ENCODE measurements at regions of chr1 and their contacts with region 1.

Region 1: GRCh38 chr1:18913065-18913835 is 10.9 kb upstream of the ALDH4A1 start:
- DNase-seq: peak; percentile 82 to 96 (median 90)
- H3K4me3 ChIP-seq: no peak overlapping the region
- H3K27ac ChIP-seq: peak overlapping the region in 3 of 5 donors; percentile 20 to 69 (median 36)
- H3K4me1 ChIP-seq: peaks cover 0 to 10% of the 10 kb centered on the region in 2 donors
- H3K27me3 ChIP-seq: no peaks in the 10 kb centered on the region
- CTCF ChIP-seq: peak; percentile 94 to 99 (median 98)
- POLR2A ChIP-seq: no peak

Region 2: DNA sequence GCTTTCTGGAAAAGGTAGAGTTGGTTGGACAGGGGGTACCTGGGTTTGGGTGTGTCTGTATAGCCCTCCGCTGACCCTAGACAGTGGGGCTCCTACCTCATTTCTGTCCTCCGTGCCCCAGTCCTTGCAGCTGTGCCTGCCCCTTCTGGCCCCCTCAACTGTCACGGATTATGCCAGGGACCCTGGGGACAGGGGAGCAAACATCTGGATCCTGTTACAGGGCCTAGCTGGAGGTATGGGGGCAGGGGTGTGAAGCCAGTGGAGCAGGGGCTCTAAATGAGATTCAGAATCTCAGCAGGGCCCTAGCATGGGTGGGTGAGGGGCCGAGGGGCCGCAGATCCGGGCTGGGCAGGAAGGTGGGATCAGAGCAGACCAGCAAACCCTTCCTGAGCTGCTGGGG is 134.8 kb before region 1 on chr1:
- intact Hi-C with region 1: no loop called
- DNase-seq: no peak
- H3K4me3 ChIP-seq: no peak overlapping the region
- H3K27ac ChIP-seq: no peak overlapping the region
- H3K4me1 ChIP-seq: no peaks in the 10 kb centered on the region
- H3K27me3 ChIP-seq: peaks cover 11% of the 10 kb centered on the region
- CTCF ChIP-seq: no peak
- POLR2A ChIP-seq: no peak

Region 3: GRCh38 chr1:19074902-19075721 is 161.9 kb after region 1 on chr1:
- intact Hi-C with region 1: loop called in 1 of 2 experiments (anchors 10 kb)
- DNase-seq: peak in 6 of 7 donors; percentile 45 to 64 (median 51)
- H3K4me3 ChIP-seq: no peak overlapping the region
- H3K27ac ChIP-seq: peak overlapping the region in 1 of 5 donors; percentile 12
- H3K4me1 ChIP-seq: no peaks in the 10 kb centered on the region
- H3K27me3 ChIP-seq: no peaks in the 10 kb centered on the region
- CTCF ChIP-seq: no peak
- POLR2A ChIP-seq: no peak

Region 4: GRCh38 chr1:19096036-19096833 is 183.0 kb after region 1 on chr1:
- intact Hi-C with region 1: loop called in 1 of 2 experiments (anchors 10 kb)
- DNase-seq: peak in 5 of 7 donors; percentile 32 to 48 (median 36)
- H3K4me3 ChIP-seq: no peak overlapping the region
- H3K27ac ChIP-seq: no peak overlapping the region
- H3K4me1 ChIP-seq: no peaks in the 10 kb centered on the region
- H3K27me3 ChIP-seq: no peaks in the 10 kb centered on the region
- CTCF ChIP-seq: peak in 4 of 6 experiments; percentile 32 to 51 (median 47)
- POLR2A ChIP-seq: no peak